PC-3 (cell line): ENCODE measurements at regions of chr13 and their contacts with region 1.

Region 1: DNA sequence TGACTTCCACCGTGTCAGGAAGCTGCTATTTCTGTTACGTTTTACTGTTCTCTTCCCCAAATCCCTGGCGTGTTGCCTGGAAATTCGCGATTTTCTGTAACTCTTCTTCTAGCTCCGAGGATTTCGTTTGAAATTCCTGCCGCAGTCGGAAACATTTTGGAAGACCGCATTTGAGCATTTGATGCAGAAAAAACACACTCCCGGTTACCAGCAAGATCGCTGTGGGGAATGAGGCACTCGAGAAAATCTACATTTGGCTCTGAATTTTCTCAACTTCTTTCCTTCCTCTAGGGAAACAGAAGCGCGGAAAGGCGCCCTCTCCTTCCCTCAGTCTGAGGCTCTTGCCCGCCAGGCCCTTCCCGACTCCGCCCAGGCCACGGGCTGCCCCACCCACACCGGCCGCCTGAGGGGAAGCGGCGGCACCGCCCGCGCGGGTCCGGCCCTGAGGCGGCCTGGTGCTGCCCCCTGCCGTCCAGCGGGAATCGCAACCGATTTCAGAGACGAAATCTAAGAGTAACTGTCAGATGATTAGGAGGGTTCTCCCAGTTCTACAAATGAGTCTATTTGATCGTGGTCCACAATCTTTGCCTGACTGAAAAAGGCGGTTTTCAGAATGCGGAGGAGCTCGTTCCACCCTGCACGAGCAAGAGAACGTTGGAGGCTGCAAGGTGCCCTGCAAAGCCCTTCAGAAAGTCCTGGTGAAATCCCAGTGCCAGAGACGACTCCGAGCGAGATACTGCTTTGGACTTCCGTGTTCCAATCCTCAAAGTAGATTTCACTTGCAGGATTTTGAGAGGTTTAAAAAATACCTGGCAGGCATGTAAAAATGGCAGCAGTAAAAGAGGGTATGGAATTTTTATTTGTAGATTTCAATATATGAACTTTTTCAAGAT is 18.4 kb upstream of the TUBGCP3 start:
- DNase-seq: peak; percentile 80
- ATAC-seq: peak; percentile 100
- H3K4me3 ChIP-seq: peak overlapping the region; percentile 66
- H3K27ac ChIP-seq: no peak overlapping the region
- H3K4me1 ChIP-seq: no peaks in the 10 kb centered on the region
- H3K27me3 ChIP-seq: peaks cover 14% of the 10 kb centered on the region
- CTCF ChIP-seq: peak; percentile 86

Region 2: DNA sequence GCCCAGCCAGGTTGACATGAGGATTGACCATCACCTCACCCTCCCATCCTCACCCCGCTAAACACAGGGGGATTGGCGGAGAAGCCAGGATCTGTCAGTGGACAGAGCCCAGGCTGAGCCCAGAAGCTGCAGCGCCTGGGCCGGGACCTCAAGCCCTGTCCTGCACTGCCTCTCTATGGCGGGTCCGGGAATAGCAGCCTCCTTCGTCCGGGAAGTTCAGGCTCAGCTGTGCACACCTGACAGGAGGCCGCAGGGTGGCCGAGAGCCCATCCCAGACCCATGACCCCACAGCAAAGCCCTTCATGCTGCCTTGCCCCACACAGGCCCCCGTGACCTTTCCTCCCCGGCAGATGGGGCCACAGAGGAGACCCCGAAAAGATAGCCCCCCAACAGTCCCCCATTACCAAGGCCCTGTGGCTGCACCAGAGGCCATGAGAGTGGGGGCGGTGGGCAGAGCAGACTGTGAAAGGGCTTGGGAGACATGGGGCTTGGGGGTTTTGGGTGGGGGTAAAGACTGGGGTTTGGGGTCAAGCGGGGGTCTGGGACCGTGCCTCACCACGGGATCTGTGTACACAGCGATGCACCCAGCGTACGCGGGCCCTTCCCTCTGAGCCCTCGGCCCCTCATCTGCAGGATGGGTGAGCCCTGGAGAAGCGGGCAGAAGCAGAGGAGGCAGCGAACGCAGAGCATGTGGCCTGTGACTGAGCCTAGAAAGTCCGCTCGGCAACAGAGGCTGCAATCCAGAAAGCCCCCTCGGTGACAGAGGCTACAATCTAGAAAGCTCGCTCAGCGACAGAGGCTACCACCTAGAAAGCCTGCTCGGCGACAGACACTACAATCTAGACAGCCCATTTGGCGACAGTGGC is 162.1 kb before region 1 on chr13:
- CTCF ChIA-PET with region 1: no interaction called
- POLR2A ChIA-PET with region 1: no interaction called
- intact Hi-C with region 1: loop called (anchors 2 kb)
- DNase-seq: peak; percentile 72
- ATAC-seq: peak; percentile 89
- H3K4me3 ChIP-seq: no peak overlapping the region
- H3K27ac ChIP-seq: no peak overlapping the region
- H3K4me1 ChIP-seq: no peaks in the 10 kb centered on the region
- H3K27me3 ChIP-seq: peaks cover 33% of the 10 kb centered on the region
- CTCF ChIP-seq: peak; percentile 72

Region 3: GRCh38 chr13:112510002-112510780 is 96.2 kb before region 1 on chr13:
- CTCF ChIA-PET with region 1: no interaction called
- POLR2A ChIA-PET with region 1: no interaction called
- intact Hi-C with region 1: loop called (anchors 2 kb)
- DNase-seq: peak; percentile 55
- ATAC-seq: peak; percentile 77
- H3K4me3 ChIP-seq: no peak overlapping the region
- H3K27ac ChIP-seq: no peak overlapping the region
- H3K4me1 ChIP-seq: peaks cover 12% of the 10 kb centered on the region; the same call in 1 of the 2 replicates
- H3K27me3 ChIP-seq: no peaks in the 10 kb centered on the region
- CTCF ChIP-seq: peak; percentile 58

Region 4: DNA sequence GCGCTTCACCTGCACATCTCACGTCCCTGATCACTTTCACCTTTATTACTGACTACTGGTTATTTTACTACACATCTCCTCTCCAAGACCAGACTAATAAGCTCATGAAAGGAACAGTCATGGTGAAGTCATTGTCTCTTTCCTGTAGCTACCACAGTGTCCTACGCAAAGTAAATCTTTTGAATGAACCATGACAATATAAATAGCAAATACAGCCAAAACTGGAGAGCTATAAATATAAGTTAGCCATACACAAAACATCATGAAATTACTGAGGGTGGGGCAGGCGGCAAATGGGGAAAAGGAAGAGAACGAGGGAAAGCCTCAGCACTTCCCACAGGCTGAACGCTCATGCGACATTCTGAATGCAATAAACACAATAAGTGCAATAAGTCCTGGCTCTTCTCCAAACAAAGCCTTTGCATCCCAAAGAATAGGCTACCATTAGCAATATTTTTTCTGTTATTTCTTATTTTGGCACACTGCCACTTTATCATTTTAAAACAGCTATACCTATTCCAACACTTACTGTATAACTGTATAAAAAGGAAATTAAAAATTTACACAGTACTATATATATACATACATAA is 80.9 kb before region 1 on chr13:
- CTCF ChIA-PET with region 1: no interaction called
- POLR2A ChIA-PET with region 1: no interaction called
- intact Hi-C with region 1: loop called (anchors 1 kb)
- DNase-seq: peak; percentile 79
- ATAC-seq: peak; percentile 94
- H3K4me3 ChIP-seq: no peak overlapping the region
- H3K27ac ChIP-seq: peak overlapping the region; percentile 59
- H3K4me1 ChIP-seq: peaks cover 24% of the 10 kb centered on the region
- H3K27me3 ChIP-seq: no peaks in the 10 kb centered on the region
- CTCF ChIP-seq: no peak